CD8-positive, alpha-beta memory T cell (primary cell): ENCODE measurements at regions of chr1 and their contacts with region 1.

Region 1: DNA sequence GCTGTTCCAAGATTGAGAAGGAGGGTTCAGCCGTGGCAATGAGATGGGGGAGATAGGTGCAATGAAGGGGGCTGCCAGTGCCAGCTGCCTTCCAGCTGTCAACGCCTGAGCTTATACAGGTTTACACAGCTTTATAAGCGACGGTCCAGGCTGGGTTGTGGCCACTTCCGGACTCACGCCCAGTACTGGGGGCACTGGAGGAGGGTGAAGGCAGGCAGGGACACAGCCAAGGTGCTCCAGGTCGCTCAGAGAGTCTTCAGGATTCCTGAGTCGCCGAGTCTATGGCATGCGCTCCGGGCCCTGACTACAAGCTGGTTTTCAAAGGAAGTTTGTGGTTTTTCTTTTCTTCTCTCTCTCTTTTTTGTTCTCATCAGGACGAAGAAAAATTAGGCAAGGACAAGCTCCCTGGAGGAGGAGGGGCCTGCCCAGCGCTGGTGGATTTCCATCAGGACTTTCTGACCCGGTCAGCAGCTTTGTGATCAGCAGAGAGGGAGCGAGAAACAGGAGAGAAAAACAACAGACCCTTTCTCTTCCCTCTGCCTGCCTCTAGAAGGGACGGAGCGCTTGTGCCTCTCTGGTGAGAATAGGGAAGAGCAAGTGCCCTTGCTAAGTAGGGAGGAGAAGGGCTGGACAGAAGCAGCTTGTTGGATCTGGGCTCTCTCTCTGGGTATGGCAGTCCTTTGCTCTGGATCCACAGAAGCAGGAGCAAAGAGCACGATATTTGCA is at the start of gene MINDY1:
- DNase-seq: peak in 3 of 5 donors; percentile 3 to 53 (median 43)
- H3K4me3 ChIP-seq: peak within 1 kb of the TSS; percentile 77
- H3K4me3 Mint-ChIP-seq: peak within 1 kb of the TSS; percentile 82 to 98 (median 93)
- H3K27ac ChIP-seq: peak within 1 kb of the TSS; percentile 89
- H3K27ac Mint-ChIP-seq: peak within 1 kb of the TSS; percentile 91 to 100 (median 99)
- H3K4me1 ChIP-seq: peaks cover 78% of the 10 kb centered on the region
- H3K4me1 Mint-ChIP-seq: peaks cover 62 to 90% (median 85%) of the 10 kb centered on the region in 3 donors
- H3K27me3 ChIP-seq: no peaks in the 10 kb centered on the region
- H3K27me3 Mint-ChIP-seq: no peaks in the 10 kb centered on the region
- total RNA-seq, gene MINDY1: 5.7 to 6.3 TPM

Region 2: GRCh38 chr1:150995896-150996295 is 10.6 kb before region 1 on chr1:
- CTCF ChIA-PET with region 1: interaction called, 26 read pairs
- POLR2A ChIA-PET with region 1: no interaction called
- DNase-seq: peak in 2 of 5 donors; percentile 23 to 40
- H3K4me3 ChIP-seq: no peak overlapping the region
- H3K4me3 Mint-ChIP-seq: peak overlapping the region in 1 of 7 donors; percentile 67
- H3K27ac ChIP-seq: no peak overlapping the region
- H3K27ac Mint-ChIP-seq: peak overlapping the region in 5 of 8 donors; percentile 22 to 93 (median 63)
- H3K4me1 ChIP-seq: peaks cover 24% of the 10 kb centered on the region
- H3K4me1 Mint-ChIP-seq: peaks cover 5 to 7% (median 6%) of the 10 kb centered on the region in 3 donors
- H3K27me3 ChIP-seq: no peaks in the 10 kb centered on the region
- H3K27me3 Mint-ChIP-seq: peaks cover 2 to 8% of the 10 kb centered on the region in 2 donors

Region 3: GRCh38 chr1:151065089-151065645 is 58.7 kb after region 1 on chr1:
- CTCF ChIA-PET with region 1: no interaction called
- POLR2A ChIA-PET with region 1: no interaction called
- DNase-seq: no peak
- H3K4me3 ChIP-seq: no peak overlapping the region
- H3K4me3 Mint-ChIP-seq: peak overlapping the region in 1 of 7 donors; percentile 17
- H3K27ac ChIP-seq: no peak overlapping the region
- H3K27ac Mint-ChIP-seq: peak overlapping the region in 2 of 8 donors; percentile 23 to 71
- H3K4me1 ChIP-seq: no peaks in the 10 kb centered on the region
- H3K4me1 Mint-ChIP-seq: peaks cover 18 to 23% (median 22%) of the 10 kb centered on the region in 3 donors
- H3K27me3 ChIP-seq: no peaks in the 10 kb centered on the region
- H3K27me3 Mint-ChIP-seq: no peaks in the 10 kb centered on the region